SK-N-SH (cell line): ENCODE measurements at regions of chr2 and their contacts with region 1.

Region 1: GRCh38 chr2:188291617-188292347 is at the start of gene GULP1:
- DNase-seq: peak; percentile 85
- H3K4me3 ChIP-seq: peak within 1 kb of the TSS; percentile 88 to 97
- H3K27ac ChIP-seq: peak within 1 kb of the TSS; percentile 88 to 99
- H3K4me1 ChIP-seq: peaks cover 2 to 5% of the 10 kb centered on the region in 2 experiments; a peak in 2 of 4 replicates
- H3K27me3 ChIP-seq: no peaks in the 10 kb centered on the region
- CTCF ChIP-seq: peak; percentile 73
- EP300 ChIP-seq: no peak; a peak in 1 of 4 replicates
- RAD21 ChIP-seq: peak; percentile 66
- polyA plus RNA-seq, gene GULP1: 33.8 and 35.0 TPM in 2 replicates

Region 2: GRCh38 chr2:187994464-187995331 is 297.1 kb before region 1 on chr2:
- CTCF ChIA-PET with region 1: interaction called, 5 read pairs
- POLR2A ChIA-PET with region 1: interaction called, 10 read pairs
- DNase-seq: peak; percentile 15
- H3K4me3 ChIP-seq: no peak overlapping the region
- H3K27ac ChIP-seq: peak overlapping the region in 1 of 2 experiments; percentile 22; a peak in 1 of 4 replicates
- H3K4me1 ChIP-seq: peaks cover 3 to 36% of the 10 kb centered on the region in 2 experiments; a peak in 2 of 4 replicates
- H3K27me3 ChIP-seq: no peaks in the 10 kb centered on the region
- CTCF ChIP-seq: no peak
- EP300 ChIP-seq: peak in 1 of 2 experiments; percentile 52; a peak in 1 of 4 replicates
- RAD21 ChIP-seq: no peak

Region 3: DNA sequence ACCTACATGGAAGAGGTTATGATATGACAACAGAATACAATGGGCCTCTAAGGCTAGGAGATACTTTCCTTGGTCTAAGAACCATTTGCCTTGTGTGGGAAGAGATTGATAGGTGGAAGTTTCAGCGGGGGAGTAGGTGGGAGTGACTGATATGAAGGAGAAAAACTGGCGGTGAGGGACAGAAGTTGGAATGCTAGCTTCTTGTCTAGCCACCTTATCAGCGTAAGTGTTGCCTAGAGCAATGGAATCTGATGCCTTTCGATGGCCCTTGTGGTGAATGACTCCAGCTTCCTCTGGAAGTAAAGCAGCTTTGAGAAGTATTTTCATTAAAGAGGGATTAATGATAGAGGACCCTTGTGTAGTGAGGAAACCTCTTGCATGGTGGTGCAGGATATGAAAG is 121.4 kb before region 1 on chr2:
- CTCF ChIA-PET with region 1: no interaction called
- POLR2A ChIA-PET with region 1: no interaction called
- DNase-seq: no peak
- H3K4me3 ChIP-seq: no peak overlapping the region
- H3K27ac ChIP-seq: no peak overlapping the region
- H3K4me1 ChIP-seq: no peaks in the 10 kb centered on the region
- H3K27me3 ChIP-seq: no peaks in the 10 kb centered on the region
- CTCF ChIP-seq: no peak
- EP300 ChIP-seq: no peak
- RAD21 ChIP-seq: no peak

Region 4: GRCh38 chr2:188307850-188308283 is 16.1 kb after region 1 on chr2:
- CTCF ChIA-PET with region 1: interaction called, 14 read pairs
- POLR2A ChIA-PET with region 1: interaction called, 9 read pairs
- DNase-seq: peak; percentile 65
- H3K4me3 ChIP-seq: no peak overlapping the region
- H3K27ac ChIP-seq: peak overlapping the region; percentile 67 to 99
- H3K4me1 ChIP-seq: peaks cover 37 to 44% of the 10 kb centered on the region in 2 experiments
- H3K27me3 ChIP-seq: no peaks in the 10 kb centered on the region
- CTCF ChIP-seq: no peak
- EP300 ChIP-seq: peak; percentile 75 to 95
- RAD21 ChIP-seq: peak; percentile 45

Region 5: DNA sequence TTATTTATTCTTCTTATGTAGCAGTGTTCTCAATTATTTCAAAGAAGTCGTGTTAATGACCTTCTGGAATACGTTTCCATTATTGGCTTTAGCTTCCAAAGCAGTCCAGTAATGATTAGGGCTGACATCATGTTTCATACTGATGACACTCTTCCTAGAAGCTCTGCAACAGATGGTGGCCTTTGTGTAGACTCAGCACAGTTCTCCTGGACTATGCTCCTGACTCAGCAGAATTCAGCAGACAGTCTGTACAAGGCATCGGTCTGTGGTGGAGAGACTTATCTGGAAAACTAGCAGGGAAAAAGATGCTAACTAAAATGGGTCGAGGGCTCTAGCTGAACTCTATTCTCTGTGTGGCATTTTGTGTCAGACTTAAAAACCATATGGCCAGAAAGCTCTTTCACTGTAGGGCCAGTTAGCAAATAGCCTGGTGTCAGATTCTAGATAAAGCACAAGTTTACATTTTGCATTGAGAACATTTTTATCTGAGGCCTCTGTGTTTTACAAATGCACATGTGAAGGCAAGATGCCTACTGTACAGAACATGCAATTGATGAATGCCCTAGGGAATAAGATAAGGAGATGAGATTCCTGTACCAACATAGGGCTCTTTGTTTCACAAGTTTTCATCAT is 35.0 kb after region 1 on chr2:
- CTCF ChIA-PET with region 1: interaction called, 8 read pairs
- POLR2A ChIA-PET with region 1: interaction called, 27 read pairs
- DNase-seq: peak; percentile 30
- H3K4me3 ChIP-seq: no peak overlapping the region
- H3K27ac ChIP-seq: peak overlapping the region; percentile 11 to 98; a peak in 3 of 4 replicates
- H3K4me1 ChIP-seq: peaks cover 31 to 45% of the 10 kb centered on the region in 2 experiments
- H3K27me3 ChIP-seq: no peaks in the 10 kb centered on the region
- CTCF ChIP-seq: no peak
- EP300 ChIP-seq: peak in 1 of 2 experiments; percentile 97; a peak in 2 of 4 replicates
- RAD21 ChIP-seq: peak; percentile 28; the same call in 1 of the 2 replicates

Region 6: DNA sequence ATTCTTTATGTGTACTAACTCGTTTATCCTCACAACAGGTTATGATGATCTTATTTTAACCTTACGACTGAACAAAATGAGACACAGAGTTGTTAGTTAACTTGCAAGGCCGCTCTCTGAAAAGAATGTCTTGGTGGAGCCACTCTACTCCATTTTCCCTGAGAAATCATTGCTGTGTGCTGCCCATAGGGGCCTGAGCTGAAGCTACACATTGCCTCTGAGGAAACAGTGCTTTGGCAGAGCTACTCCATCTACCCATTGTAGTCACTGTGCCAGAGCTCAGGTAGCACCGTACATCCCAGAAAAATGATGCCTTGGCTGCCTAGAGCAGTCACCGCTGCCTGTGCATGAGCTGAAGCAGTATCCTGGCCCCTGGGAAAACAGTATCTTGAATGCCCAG is 61.5 kb after region 1 on chr2:
- CTCF ChIA-PET with region 1: no interaction called
- POLR2A ChIA-PET with region 1: no interaction called
- DNase-seq: no peak
- H3K4me3 ChIP-seq: no peak overlapping the region
- H3K27ac ChIP-seq: no peak overlapping the region
- H3K4me1 ChIP-seq: no peaks in the 10 kb centered on the region
- H3K27me3 ChIP-seq: no peaks in the 10 kb centered on the region
- CTCF ChIP-seq: no peak
- EP300 ChIP-seq: no peak
- RAD21 ChIP-seq: no peak

Region 7: DNA sequence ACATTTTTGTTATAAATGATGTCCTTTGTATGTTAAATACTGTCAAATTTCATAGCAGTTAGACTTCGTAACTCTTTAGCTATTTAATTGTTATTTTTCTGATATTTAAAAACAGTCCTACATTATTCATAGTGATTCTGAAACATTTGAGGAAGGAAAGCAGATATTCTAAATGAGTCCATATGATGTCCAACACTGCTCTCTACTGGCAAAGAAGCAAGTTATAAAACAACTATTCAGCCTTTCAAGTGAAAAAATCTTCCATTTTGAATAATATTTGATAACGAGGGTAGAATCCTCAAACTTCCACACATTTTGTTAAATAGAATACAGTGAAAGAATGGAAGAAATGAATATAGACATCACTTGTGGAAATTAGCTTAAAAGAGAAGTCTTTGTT is 220.7 kb after region 1 on chr2:
- CTCF ChIA-PET with region 1: interaction called, 36 read pairs
- POLR2A ChIA-PET with region 1: interaction called, 6 read pairs
- DNase-seq: peak; percentile 14
- H3K4me3 ChIP-seq: peak overlapping the region in 1 of 2 experiments; percentile 0; a peak in 1 of 4 replicates
- H3K27ac ChIP-seq: peak overlapping the region in 1 of 2 experiments; percentile 81; a peak in 2 of 4 replicates
- H3K4me1 ChIP-seq: peaks cover 3 to 15% of the 10 kb centered on the region in 2 experiments; a peak in 3 of 4 replicates
- H3K27me3 ChIP-seq: no peaks in the 10 kb centered on the region
- CTCF ChIP-seq: peak; percentile 84
- EP300 ChIP-seq: no peak
- RAD21 ChIP-seq: peak; percentile 96